Ascending aorta (tissue), 2 donors: ENCODE measurements at regions of chr15 and their contacts with region 1.

Region 1: GRCh38 chr15:67863442-67863987 is 23.7 kb upstream of the RNU6-1 start:
- DNase-seq: peak in 1 of 2 donors; percentile 85
- H3K4me3 ChIP-seq: peak overlapping the region; percentile 55 to 60
- H3K27ac ChIP-seq: peak overlapping the region; percentile 55 to 57
- H3K4me1 ChIP-seq: peaks cover 3 to 7% of the 10 kb centered on the region in 2 donors
- H3K27me3 ChIP-seq: no peaks in the 10 kb centered on the region
- CTCF ChIP-seq: peak; percentile 91 to 97 (median 96)

Region 2: DNA sequence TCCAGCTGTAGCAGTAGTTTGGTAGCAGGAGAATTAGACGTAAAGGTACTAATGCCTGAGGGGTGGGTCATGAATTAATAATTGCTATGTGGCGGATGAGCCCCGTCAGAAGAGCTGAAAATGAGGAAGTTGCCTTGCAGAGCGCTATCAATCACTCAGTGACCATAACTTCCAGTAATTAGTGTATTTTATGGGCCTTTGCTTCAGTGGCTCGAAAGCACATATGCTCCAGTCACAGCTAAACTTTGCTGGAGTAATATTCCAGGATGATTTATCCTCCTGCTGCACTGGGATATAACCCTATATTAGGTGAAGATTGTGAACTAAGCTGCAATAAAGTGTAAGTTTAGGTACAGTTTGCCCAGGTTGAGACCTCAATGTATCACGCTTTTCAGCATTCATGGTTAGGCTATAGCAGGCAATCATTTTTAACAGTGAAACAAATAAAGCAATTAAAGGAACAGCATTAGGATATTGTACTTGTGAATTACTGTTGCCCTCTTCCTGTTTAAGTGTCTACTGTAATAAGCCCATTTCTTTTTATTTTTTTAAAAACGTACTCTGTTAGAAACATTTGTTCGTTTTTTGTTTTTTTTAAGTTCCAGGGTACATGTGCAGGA is 142.8 kb before region 1 on chr15:
- intact Hi-C with region 1: no loop called
- DNase-seq: no peak
- H3K4me3 ChIP-seq: no peak overlapping the region
- H3K27ac ChIP-seq: no peak overlapping the region
- H3K4me1 ChIP-seq: no peaks in the 10 kb centered on the region
- H3K27me3 ChIP-seq: no peaks in the 10 kb centered on the region
- CTCF ChIP-seq: no peak

Region 3: GRCh38 chr15:67776600-67776999 is 86.9 kb before region 1 on chr15:
- intact Hi-C with region 1: no loop called
- DNase-seq: no peak
- H3K4me3 ChIP-seq: no peak overlapping the region
- H3K27ac ChIP-seq: no peak overlapping the region
- H3K4me1 ChIP-seq: no peaks in the 10 kb centered on the region
- H3K27me3 ChIP-seq: no peaks in the 10 kb centered on the region
- CTCF ChIP-seq: no peak

Region 4: DNA sequence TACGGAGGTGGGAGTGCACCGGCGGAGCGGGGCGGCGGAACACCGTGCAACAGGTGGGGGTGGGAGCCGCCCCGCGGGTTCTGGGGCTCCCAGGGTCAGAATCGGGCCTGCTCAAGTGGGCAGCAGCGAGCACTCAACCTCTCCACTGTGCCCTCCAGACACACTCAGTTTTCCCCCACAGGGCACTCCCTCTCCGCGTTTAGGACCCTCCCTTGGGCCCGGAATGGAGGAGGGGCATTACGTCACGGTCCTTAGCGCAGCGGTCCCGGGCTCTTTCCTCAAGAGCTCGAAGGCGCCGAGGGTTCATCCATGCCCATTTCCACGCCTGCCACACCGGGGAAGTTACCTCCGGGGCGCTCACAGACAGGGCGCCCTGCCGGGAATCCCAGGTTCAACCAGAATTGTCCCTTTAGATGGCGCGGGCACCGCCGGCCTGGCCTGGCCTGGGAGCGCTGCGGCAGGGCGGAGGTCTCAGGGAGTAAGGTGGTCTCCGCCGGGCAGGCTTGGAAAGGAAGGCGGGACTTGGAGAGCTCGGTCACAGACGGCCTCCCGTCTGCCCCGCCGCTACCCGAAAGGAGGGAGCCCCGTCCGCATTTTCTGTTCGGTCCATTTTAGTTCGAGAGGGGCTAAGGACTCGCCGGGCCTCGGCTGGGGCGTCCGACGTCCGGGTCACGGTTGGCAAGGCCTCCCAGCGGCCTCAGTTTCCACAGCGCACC is 28.8 kb before region 1 on chr15:
- intact Hi-C with region 1: no loop called
- DNase-seq: no peak
- H3K4me3 ChIP-seq: peak overlapping the region; percentile 38 to 56
- H3K27ac ChIP-seq: no peak overlapping the region
- H3K4me1 ChIP-seq: peaks cover 10 to 32% of the 10 kb centered on the region in 2 donors
- H3K27me3 ChIP-seq: peaks cover 34% of the 10 kb centered on the region
- CTCF ChIP-seq: no peak

Region 5: GRCh38 chr15:67845974-67846373 is 17.5 kb before region 1 on chr15:
- intact Hi-C with region 1: no loop called
- DNase-seq: no peak
- H3K4me3 ChIP-seq: no peak overlapping the region
- H3K27ac ChIP-seq: no peak overlapping the region
- H3K4me1 ChIP-seq: peaks cover 0 to 2% of the 10 kb centered on the region in 2 donors
- H3K27me3 ChIP-seq: no peaks in the 10 kb centered on the region
- CTCF ChIP-seq: no peak

Region 6: GRCh38 chr15:67884514-67885487 is 21.3 kb after region 1 on chr15:
- intact Hi-C with region 1: loop called (anchors 2 kb)
- DNase-seq: peak; percentile 30 to 88
- H3K4me3 ChIP-seq: peak overlapping the region; percentile 60 to 67
- H3K27ac ChIP-seq: peak overlapping the region; percentile 54 to 81
- H3K4me1 ChIP-seq: peaks cover 0 to 4% of the 10 kb centered on the region in 2 donors
- H3K27me3 ChIP-seq: no peaks in the 10 kb centered on the region
- CTCF ChIP-seq: no peak

Region 7: GRCh38 chr15:67914537-67915460 is 51.3 kb after region 1 on chr15:
- intact Hi-C with region 1: loop called (anchors 10 kb)
- DNase-seq: peak; percentile 29 to 80
- H3K4me3 ChIP-seq: peak overlapping the region; percentile 26 to 43
- H3K27ac ChIP-seq: peak overlapping the region; percentile 87 to 92
- H3K4me1 ChIP-seq: peaks cover 13 to 54% of the 10 kb centered on the region in 2 donors
- H3K27me3 ChIP-seq: no peaks in the 10 kb centered on the region
- CTCF ChIP-seq: no peak

Region 8: DNA sequence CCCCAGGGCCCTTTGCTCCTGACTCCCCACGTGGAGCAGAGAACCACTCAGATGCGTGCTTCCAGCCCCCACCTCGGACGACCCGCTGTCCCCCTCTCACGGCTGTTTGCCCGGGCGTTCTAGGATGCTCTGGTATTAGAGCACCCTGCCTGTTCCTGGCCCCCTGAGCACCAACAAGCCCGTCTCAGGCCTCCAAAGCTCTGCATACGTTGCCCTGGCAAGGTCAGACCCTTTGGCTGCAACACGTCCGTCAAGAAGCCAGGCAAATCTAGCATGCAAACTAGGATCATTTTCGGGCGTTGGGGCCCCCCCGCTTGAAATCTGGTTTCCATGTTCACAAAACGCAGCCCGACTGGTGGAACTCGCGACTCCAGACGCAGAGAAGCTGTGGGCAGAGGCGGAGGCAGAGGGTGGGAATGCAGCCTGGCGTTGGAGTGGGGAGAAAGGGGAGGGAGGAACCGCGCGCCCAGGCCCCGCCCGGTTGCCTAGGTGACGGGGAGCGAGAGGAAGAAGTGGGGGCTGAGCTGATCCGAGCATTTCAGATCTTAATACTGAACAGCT is 104.4 kb after region 1 on chr15:
- intact Hi-C with region 1: loop called (anchors 5 kb)
- DNase-seq: peak in 1 of 2 donors; percentile 89
- H3K4me3 ChIP-seq: peak overlapping the region; percentile 41 to 59
- H3K27ac ChIP-seq: peak overlapping the region in 1 of 2 donors; percentile 45
- H3K4me1 ChIP-seq: no peaks in the 10 kb centered on the region
- H3K27me3 ChIP-seq: no peaks in the 10 kb centered on the region
- CTCF ChIP-seq: no peak

Region 9: DNA sequence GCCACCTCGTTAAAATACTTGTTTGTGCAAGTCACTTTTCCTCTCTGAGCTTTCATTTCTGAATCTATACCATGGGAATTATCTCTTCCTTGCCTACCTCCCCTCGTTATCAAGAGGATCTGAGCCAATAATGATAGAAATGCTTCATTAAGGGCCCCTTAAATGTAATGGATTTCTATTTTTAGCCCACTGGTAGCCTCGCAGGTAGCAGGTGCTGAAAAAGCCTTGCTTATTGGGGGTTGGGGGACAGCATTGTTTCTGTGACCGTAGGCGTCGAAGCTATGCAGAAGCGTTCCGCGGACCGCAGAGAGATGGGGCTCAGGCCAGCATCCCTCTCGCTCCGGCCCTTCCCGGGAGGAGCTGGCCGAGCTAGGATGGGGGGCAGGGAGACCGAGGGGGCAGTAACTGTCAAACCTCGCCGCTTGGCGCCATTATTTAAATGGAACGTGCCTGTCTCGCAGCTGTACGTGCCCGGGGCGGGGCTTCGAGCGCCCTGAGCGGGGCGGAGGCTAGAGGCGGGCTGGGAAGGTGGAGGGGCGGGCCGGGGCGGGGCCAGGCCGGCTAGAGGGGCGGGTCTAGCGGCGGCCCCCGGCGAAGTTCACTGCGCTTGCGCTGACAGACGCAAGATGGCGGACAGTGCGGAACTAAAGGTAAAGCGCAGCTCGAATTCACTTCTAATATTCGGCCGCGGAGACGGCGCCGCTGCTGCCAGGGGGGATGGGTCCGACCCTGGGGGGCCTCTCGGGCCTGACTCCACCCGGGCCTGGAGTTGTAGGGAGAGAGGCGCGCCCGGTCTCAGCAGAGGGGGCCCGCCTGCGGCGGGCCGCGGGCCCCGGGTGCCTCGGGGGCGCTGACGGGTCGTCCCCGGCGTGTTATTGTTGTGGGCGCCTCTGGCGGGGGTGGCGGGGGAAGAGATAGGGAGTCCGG is 190.4 kb after region 1 on chr15 and contains the start of gene PIAS1:
- intact Hi-C with region 1: loop called (anchors 1 kb)
- DNase-seq: peak; percentile 80 to 97
- H3K4me3 ChIP-seq: peak within 1 kb of the TSS; percentile 79 to 99
- H3K27ac ChIP-seq: peak within 1 kb of the TSS; percentile 83 to 92
- H3K4me1 ChIP-seq: peaks cover 0 to 6% of the 10 kb centered on the region in 2 donors
- H3K27me3 ChIP-seq: no peaks in the 10 kb centered on the region
- CTCF ChIP-seq: peak in 1 of 3 experiments; percentile 48
- total RNA-seq, gene PIAS1: 17.1 TPM

Region 10: DNA sequence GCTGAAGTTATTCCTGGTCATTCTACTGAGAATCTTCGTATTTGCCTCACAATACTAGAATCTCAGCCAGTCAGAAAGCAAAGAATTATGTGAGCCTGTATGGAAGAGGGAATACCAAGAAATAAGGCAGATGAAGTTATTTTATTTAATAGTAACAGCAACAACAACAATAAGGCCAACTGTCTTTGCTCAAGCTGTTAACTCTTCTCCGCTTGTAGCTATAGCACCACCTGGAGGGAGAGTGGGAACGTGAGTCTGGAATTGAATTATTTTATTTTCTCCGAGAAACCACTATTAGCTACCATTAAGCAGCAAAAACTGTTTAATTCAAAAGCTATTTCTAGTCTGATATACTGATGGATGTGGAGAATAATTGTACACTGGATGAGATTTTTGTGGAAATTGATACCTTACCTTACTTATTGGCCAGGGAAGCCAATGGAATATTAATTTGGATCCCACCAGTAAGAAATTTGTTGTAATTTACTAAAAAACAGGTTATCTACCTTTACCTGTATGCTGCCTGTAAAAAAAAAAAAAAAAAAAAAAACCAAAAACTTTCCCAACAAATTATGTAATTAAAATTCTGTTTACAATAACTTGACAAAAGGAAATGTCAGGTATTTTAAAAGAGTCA is 291.5 kb after region 1 on chr15:
- intact Hi-C with region 1: loop called (anchors 1 kb)
- DNase-seq: no peak
- H3K4me3 ChIP-seq: no peak overlapping the region
- H3K27ac ChIP-seq: no peak overlapping the region
- H3K4me1 ChIP-seq: peaks cover 0 to 18% of the 10 kb centered on the region in 2 donors
- H3K27me3 ChIP-seq: no peaks in the 10 kb centered on the region
- CTCF ChIP-seq: peak; percentile 32 to 78 (median 74)

Region 11: DNA sequence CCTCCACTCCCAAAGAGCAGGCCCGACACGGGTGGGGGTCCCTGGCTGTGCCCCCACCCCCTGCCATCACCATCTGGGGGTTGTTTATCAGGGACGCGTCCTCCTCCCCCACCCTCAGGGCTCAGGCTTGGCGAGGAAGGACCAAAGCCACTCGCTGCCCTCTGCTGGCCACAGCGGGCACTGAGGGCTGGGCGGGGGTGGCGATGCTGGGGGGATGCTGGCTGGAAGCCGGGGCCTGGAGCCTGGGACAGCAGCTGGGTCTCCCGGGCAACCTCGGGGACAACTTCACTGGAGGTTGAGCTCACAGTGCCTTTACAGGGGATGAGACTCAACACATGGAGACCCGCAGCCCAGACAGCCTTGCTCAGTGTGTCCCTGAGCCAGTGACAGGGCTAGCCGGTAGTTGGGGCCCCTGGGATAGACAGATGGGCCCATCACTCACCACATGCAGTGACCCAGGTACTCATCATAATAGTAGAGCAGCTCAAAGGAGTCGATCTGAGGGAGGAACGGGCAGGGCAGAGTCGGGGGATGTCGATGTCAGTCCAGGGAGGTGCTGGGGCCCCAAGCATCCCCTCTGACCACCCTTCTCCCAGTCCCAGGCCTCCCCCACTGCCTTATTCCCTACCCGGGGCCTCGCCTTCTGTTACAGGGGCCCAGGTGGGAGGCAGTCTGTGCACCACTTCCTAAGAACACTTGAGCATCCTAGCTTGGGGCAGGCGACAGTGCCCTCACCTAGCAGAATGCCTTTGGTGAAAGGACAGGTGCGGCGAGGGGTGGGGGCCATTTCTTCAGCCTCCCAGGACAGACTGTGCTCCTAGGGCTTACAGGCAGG is 347.5 kb after region 1 on chr15:
- intact Hi-C with region 1: loop called (anchors 1 kb)
- DNase-seq: peak in 1 of 2 donors; percentile 82
- H3K4me3 ChIP-seq: peak overlapping the region; percentile 35 to 51
- H3K27ac ChIP-seq: no peak overlapping the region
- H3K4me1 ChIP-seq: peaks cover 3 to 10% of the 10 kb centered on the region in 2 donors
- H3K27me3 ChIP-seq: no peaks in the 10 kb centered on the region
- CTCF ChIP-seq: peak; percentile 88 to 98 (median 93)